WTC11 (cell line): ENCODE measurements at regions of chr10 and their contacts with region 1.

Region 1: DNA sequence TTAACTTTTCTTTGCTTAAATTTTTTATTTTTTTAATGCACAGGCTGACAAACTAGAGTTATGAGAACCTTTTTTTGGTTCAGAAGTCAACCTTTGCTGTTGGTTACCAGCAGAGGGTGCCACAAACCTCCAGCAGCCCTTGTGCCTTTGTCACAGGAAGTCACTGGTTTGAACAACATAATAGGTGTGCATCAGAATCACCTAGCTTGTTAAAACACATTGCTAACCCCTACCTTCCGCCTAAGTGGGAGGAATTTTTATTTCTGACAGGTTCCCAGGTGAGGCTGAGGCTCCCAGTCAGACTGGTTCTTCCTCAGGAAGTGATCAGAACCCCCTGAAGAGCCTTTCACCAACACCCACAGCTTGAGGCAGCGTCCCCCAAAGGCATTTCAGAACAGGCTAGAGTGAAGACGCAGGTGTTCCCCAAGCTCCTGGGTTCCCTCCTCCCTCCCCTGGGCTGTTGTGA is 22.6 kb upstream of the VDAC2 start:
- DNase-seq: peak; percentile 58
- ATAC-seq: peak; percentile 91
- H3K4me3 Mint-ChIP-seq: no peak overlapping the region
- H3K27ac Mint-ChIP-seq: peak overlapping the region; percentile 92
- H3K4me1 Mint-ChIP-seq: peaks cover 38% of the 10 kb centered on the region
- H3K27me3 Mint-ChIP-seq: no peaks in the 10 kb centered on the region
- CTCF ChIP-seq: peak; percentile 28; the same call in 1 of the 2 replicates

Region 2: GRCh38 chr10:75111367-75111906 is 76.6 kb before region 1 on chr10 and contains the start of gene SAMD8:
- CTCF ChIA-PET with region 1: interaction called, 13 read pairs
- POLR2A ChIA-PET with region 1: interaction called, 6 read pairs
- DNase-seq: peak; percentile 98
- ATAC-seq: no peak
- H3K4me3 Mint-ChIP-seq: peak within 1 kb of the TSS; percentile 97
- H3K27ac Mint-ChIP-seq: peak within 1 kb of the TSS; percentile 99
- H3K4me1 Mint-ChIP-seq: peaks cover 53% of the 10 kb centered on the region
- H3K27me3 Mint-ChIP-seq: no peaks in the 10 kb centered on the region
- CTCF ChIP-seq: peak; percentile 44; the same call in 1 of the 2 replicates
- total RNA-seq, gene SAMD8: 20.9 to 23.0 TPM (median 21.7 TPM) in 3 replicates

Region 3: DNA sequence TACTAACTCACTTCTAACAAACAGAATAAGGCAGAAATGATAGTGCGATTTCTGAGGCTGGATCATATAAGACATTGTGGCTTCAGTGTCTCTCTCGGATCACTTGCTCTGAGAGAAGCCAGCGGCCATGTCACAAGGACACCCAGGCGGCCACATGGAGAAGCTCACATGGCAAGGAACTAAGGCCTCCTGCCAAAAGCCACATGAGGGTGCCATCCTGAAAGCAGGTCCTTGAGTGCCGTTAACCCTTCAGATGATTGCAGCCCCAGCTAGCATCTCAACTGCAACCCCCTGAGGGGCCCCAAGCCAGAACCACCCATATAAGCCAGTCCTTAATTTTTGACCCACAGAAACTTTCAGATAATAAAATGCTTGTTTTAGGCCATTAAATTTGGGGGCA is 15.7 kb after region 1 on chr10:
- CTCF ChIA-PET with region 1: interaction called, 38 read pairs
- POLR2A ChIA-PET with region 1: interaction called, 3 read pairs
- DNase-seq: no peak
- ATAC-seq: peak; percentile 72
- H3K4me3 Mint-ChIP-seq: no peak overlapping the region
- H3K27ac Mint-ChIP-seq: 0 out of 2 replicates have a peak overlapping the region, but pooled peaks have one; percentile 66
- H3K4me1 Mint-ChIP-seq: peaks cover 22% of the 10 kb centered on the region
- H3K27me3 Mint-ChIP-seq: no peaks in the 10 kb centered on the region
- CTCF ChIP-seq: no peak

Region 4: GRCh38 chr10:75210282-75211006 is 22.4 kb after region 1 on chr10 and contains the start of gene VDAC2:
- CTCF ChIA-PET with region 1: interaction called, 36 read pairs
- POLR2A ChIA-PET with region 1: interaction called, 14 read pairs
- DNase-seq: peak; percentile 83
- ATAC-seq: peak; percentile 80
- H3K4me3 Mint-ChIP-seq: peak within 1 kb of the TSS; percentile 97
- H3K27ac Mint-ChIP-seq: peak within 1 kb of the TSS; percentile 98
- H3K4me1 Mint-ChIP-seq: peaks cover 42% of the 10 kb centered on the region
- H3K27me3 Mint-ChIP-seq: no peaks in the 10 kb centered on the region
- CTCF ChIP-seq: no peak
- total RNA-seq, gene VDAC2: 283 to 284 TPM (median 283 TPM) in 3 replicates

Region 5: DNA sequence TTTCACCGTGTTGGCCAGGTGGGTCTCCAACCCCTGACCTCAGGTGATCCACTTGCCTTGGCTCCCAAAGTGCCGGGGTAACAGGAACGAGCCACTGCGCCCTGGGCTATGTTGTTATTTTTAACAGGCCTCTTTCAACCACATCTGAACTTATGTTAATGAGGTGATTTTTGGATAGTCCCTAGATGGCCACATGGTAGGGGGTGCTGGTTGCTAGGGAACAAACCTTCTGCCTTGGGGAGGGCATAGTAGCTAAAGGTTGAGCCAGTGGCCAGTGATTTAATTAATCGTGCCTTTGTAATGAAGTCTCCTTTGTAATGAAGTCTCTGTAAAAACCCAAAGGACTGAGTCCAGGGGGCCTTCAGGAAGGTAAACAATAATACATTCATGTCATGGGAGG is 38.7 kb after region 1 on chr10:
- CTCF ChIA-PET with region 1: interaction called, 145 read pairs
- POLR2A ChIA-PET with region 1: interaction called, 4 read pairs
- DNase-seq: peak; percentile 47
- ATAC-seq: peak; percentile 2
- H3K4me3 Mint-ChIP-seq: peak overlapping the region; percentile 42
- H3K27ac Mint-ChIP-seq: peak overlapping the region; percentile 98
- H3K4me1 Mint-ChIP-seq: peaks cover 69% of the 10 kb centered on the region
- H3K27me3 Mint-ChIP-seq: no peaks in the 10 kb centered on the region
- CTCF ChIP-seq: no peak

Region 6: DNA sequence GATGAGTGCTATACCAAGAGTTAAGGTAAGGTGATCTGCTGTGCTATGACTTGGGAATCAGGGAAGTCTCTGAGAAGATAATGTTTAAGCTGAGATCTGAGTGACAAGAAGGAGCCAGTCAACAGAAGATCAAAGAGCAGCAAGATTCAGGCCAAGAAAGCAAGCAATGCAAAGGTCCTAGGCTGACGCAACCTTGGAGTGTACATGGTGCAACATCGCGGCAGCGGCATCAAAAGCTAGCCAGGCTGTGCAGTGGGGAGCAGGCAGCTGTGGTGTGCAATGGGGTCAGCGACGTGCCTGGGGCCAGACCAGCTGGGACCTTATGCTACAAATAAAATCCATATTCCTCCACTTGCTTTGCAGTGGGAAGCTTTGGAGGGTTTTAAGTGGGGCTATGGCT is 567.5 kb after region 1 on chr10:
- CTCF ChIA-PET with region 1: no interaction called
- POLR2A ChIA-PET with region 1: no interaction called
- DNase-seq: no peak
- ATAC-seq: no peak
- H3K4me3 Mint-ChIP-seq: no peak overlapping the region
- H3K27ac Mint-ChIP-seq: no peak overlapping the region
- H3K4me1 Mint-ChIP-seq: peaks cover 8% of the 10 kb centered on the region
- H3K27me3 Mint-ChIP-seq: no peaks in the 10 kb centered on the region
- CTCF ChIP-seq: no peak